Mammary epithelial cell (primary cell): ENCODE measurements at regions of chr20 and their contacts with region 1.

Region 1: DNA sequence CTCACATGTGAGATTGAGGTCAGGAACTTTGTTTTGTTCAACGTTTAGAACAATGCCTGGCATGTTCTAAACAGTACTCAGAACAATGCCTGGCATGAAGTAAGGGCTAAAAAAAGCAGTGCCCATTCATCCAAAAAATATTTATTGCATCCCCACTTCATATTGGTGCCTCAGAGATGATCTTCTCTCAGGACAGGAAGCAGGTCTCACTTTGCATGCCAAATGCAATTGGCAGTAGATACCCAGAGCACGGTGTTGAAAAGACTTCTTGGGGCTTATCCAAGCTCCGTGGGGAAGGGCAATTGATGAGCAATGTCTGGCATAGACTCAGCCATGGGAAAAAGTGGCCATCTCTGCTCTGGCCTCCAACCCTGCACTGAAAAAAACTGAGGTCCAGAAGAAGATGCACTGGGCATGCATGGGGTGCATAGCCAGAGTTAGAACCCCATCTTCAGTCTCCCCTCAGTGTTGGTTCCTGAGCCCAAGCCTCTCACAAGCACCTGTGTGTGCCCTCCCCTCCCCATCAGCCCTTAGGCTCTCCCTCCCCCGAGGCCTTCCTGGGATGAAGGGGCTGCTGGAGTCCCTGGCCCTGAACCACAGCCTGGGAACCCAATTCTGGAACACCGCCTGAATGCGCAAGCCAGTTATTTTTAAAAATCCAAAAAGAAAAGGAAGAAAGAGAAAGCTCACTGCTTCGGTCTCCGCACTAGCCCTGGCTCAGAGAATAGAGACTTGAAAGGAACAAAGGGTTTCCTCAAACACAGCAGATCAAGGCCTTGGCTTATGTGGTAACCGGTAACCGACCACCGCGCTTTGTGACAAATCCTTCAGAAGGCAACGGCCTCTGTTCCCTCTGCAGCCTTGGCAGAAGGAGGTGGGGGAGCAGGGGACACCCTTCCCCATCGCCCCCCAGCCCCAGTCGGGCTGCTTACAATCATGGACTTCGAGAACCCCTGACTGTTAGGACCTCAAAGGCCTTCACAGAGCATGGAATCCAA is 78.5 kb upstream of the SIRPA start:
- DNase-seq: peak; percentile 92
- H3K4me3 ChIP-seq: no peak overlapping the region
- H3K27ac ChIP-seq: peak overlapping the region; percentile 80
- H3K4me1 ChIP-seq: peaks cover 59% of the 10 kb centered on the region
- H3K27me3 ChIP-seq: no peaks in the 10 kb centered on the region
- CTCF ChIP-seq: no peak

Region 2: GRCh38 chr20:1830240-1830639 is 13.6 kb after region 1 on chr20:
- CTCF ChIA-PET with region 1: no interaction called
- dilution Hi-C with region 1: no loop called
- in situ Hi-C with region 1: no loop called
- intact Hi-C with region 1: loop called (anchors 1 kb)
- DNase-seq: peak; percentile 99
- H3K4me3 ChIP-seq: no peak overlapping the region
- H3K27ac ChIP-seq: peak overlapping the region; percentile 94
- H3K4me1 ChIP-seq: peaks cover 46% of the 10 kb centered on the region
- H3K27me3 ChIP-seq: no peaks in the 10 kb centered on the region
- CTCF ChIP-seq: no peak